BJ (cell line): ENCODE measurements at regions of chr7 and their contacts with region 1.

Region 1: GRCh38 chr7:107879400-107880035 is 11.5 kb upstream of the DLD start:
- DNase-seq: no peak
- H3K4me3 ChIP-seq: no peak overlapping the region
- H3K27me3 ChIP-seq: peaks cover 4% of the 10 kb centered on the region
- CTCF ChIP-seq: peak; percentile 85

Region 2: GRCh38 chr7:107462740-107463444 is 416.6 kb before region 1 on chr7:
- CTCF ChIA-PET with region 1: interaction called, 10 read pairs
- POLR2A ChIA-PET with region 1: no interaction called
- DNase-seq: no peak
- H3K4me3 ChIP-seq: no peak overlapping the region
- H3K27me3 ChIP-seq: no peaks in the 10 kb centered on the region
- CTCF ChIP-seq: peak; percentile 84

Region 3: DNA sequence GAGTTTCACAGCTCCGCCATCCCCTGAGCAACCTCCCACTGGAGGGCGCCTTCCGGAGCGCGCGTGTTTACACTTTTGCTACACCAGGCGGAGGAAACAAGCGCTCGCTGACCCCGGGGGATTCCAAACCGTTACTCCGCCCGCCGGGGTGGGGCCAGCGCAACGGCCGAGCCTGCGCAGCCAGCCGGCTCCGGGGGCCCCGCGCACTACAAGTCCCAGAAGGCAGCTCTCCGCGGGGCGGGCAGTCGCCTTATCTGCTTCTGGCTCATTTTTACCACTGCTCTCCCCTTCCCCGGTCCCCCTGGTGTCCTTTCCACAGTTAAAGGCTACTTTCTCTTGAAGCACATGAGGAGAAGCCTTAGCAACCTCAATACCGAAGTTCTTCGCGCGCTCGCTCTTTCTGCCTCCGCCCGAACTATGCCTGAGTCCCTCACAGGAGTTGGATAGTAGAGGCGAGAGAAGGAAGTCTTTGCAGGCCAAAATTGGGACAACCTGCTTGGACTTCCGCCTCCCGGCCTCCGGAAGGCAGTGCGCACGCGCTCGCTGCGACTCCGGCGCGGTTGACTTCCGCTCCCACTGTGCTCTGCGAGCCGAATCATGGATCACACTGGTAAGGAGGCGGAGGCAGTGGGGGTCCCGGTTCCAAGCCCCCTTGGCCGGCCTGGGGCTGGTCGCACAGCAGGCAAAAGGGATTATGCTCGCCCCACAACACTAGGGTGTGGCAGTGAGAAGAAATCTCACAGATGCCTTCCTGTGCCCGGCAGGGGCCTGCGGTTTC is 135.8 kb before region 1 on chr7 and contains the start of gene CBLL1:
- CTCF ChIA-PET with region 1: interaction called, 112 read pairs
- POLR2A ChIA-PET with region 1: interaction called, 5 read pairs
- DNase-seq: peak; percentile 77
- H3K4me3 ChIP-seq: peak within 1 kb of the TSS; percentile 74
- H3K27me3 ChIP-seq: no peaks in the 10 kb centered on the region
- CTCF ChIP-seq: peak; percentile 82
- polyA plus RNA-seq, gene CBLL1: 12.2 and 13.9 TPM in 2 replicates

Region 4: GRCh38 chr7:107890962-107891635 is 11.6 kb after region 1 on chr7 and contains the start of gene DLD:
- CTCF ChIA-PET with region 1: interaction called, 36 read pairs
- POLR2A ChIA-PET with region 1: no interaction called
- DNase-seq: peak; percentile 44
- H3K4me3 ChIP-seq: peak within 1 kb of the TSS; percentile 83
- H3K27me3 ChIP-seq: no peaks in the 10 kb centered on the region
- CTCF ChIP-seq: no peak
- polyA plus RNA-seq, gene DLD: 72.4 and 121 TPM in 2 replicates

Region 5: GRCh38 chr7:107907790-107908189 is 28.3 kb after region 1 on chr7:
- CTCF ChIA-PET with region 1: no interaction called
- POLR2A ChIA-PET with region 1: no interaction called
- DNase-seq: no peak
- H3K4me3 ChIP-seq: no peak overlapping the region
- H3K27me3 ChIP-seq: no peaks in the 10 kb centered on the region
- CTCF ChIP-seq: no peak

Region 6: GRCh38 chr7:108002726-108003598 is 123.4 kb after region 1 on chr7 and contains the start of gene LAMB1:
- CTCF ChIA-PET with region 1: interaction called, 11 read pairs
- POLR2A ChIA-PET with region 1: no interaction called
- DNase-seq: no peak
- H3K4me3 ChIP-seq: peak within 1 kb of the TSS; percentile 66
- H3K27me3 ChIP-seq: no peaks in the 10 kb centered on the region; the same call in 1 of the 2 replicates
- CTCF ChIP-seq: 0 out of 2 replicates have a peak, but pooled peaks have one; percentile 7
- polyA plus RNA-seq, gene LAMB1: 171 and 204 TPM in 2 replicates

Region 7: DNA sequence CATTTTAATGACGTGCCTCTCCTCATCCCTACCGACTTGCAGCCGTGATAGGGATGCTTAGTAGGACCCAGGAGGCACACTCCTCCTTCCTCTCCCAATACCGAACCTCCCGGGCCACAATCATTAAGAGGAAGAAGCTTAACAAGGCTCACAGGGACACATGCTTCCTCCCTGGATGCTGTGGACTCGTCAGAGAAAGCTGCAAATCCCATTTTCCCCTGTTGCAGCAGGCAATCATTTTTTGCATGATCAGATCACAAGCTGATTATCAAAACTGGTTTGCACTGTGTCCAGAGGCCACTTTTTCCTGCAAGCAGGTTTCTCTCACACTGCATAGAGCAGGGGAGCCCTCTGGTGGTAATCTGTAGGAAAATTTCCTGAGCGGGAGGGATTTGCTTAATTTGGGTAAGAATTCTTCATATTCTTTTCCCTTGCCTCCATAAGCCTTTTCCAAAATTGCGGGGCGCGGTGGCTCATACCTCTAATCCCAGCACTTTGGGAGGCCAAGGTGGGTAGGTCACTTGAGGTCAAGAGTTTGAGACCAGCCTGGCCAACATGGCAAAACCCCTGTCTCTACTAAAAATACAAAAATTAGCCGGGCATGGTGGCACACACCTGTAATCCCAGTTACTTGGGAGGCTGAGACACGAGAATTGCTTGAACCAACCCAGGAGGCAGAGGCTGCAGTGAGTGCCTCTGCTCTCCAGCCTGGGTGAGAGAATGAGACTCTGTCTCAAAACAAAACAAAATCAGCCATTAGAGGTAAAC is 266.7 kb after region 1 on chr7:
- CTCF ChIA-PET with region 1: interaction called, 43 read pairs
- POLR2A ChIA-PET with region 1: no interaction called
- DNase-seq: peak; percentile 35
- H3K4me3 ChIP-seq: no peak overlapping the region; the same call in 1 of the 2 replicates
- H3K27me3 ChIP-seq: peaks cover 1% of the 10 kb centered on the region; the same call in 1 of the 2 replicates
- CTCF ChIP-seq: peak; percentile 93